Activated B cell treated with CpG ODN at 0.5 μM for 24 hours (primary cell): ENCODE measurements at regions of chr3 and their contacts with region 1.

Region 1: GRCh38 chr3:124928333-124929202 is 6.0 kb downstream of the MUC13 start:
- DNase-seq: no peak
- ATAC-seq: no peak
- H3K4me3 Mint-ChIP-seq: no peak overlapping the region
- H3K27ac Mint-ChIP-seq: no peak overlapping the region
- H3K4me1 Mint-ChIP-seq: no peaks in the 10 kb centered on the region
- H3K27me3 Mint-ChIP-seq: peaks cover 10% of the 10 kb centered on the region
- CTCF ChIP-seq: no peak

Region 2: GRCh38 chr3:124315215-124316033 is 613.1 kb before region 1 on chr3:
- CTCF ChIA-PET with region 1: no interaction called
- POLR2A ChIA-PET with region 1: no interaction called
- intact Hi-C with region 1: no loop called
- DNase-seq: no peak
- ATAC-seq: no peak
- H3K4me3 Mint-ChIP-seq: no peak overlapping the region
- H3K27ac Mint-ChIP-seq: no peak overlapping the region
- H3K4me1 Mint-ChIP-seq: no peaks in the 10 kb centered on the region
- H3K27me3 Mint-ChIP-seq: no peaks in the 10 kb centered on the region
- CTCF ChIP-seq: no peak

Region 3: GRCh38 chr3:124951511-124952281 is 23.1 kb after region 1 on chr3:
- CTCF ChIA-PET with region 1: no interaction called
- POLR2A ChIA-PET with region 1: no interaction called
- intact Hi-C with region 1: no loop called
- DNase-seq: no peak
- ATAC-seq: no peak
- H3K4me3 Mint-ChIP-seq: no peak overlapping the region
- H3K27ac Mint-ChIP-seq: no peak overlapping the region
- H3K4me1 Mint-ChIP-seq: no peaks in the 10 kb centered on the region
- H3K27me3 Mint-ChIP-seq: no peaks in the 10 kb centered on the region
- CTCF ChIP-seq: no peak

Region 4: DNA sequence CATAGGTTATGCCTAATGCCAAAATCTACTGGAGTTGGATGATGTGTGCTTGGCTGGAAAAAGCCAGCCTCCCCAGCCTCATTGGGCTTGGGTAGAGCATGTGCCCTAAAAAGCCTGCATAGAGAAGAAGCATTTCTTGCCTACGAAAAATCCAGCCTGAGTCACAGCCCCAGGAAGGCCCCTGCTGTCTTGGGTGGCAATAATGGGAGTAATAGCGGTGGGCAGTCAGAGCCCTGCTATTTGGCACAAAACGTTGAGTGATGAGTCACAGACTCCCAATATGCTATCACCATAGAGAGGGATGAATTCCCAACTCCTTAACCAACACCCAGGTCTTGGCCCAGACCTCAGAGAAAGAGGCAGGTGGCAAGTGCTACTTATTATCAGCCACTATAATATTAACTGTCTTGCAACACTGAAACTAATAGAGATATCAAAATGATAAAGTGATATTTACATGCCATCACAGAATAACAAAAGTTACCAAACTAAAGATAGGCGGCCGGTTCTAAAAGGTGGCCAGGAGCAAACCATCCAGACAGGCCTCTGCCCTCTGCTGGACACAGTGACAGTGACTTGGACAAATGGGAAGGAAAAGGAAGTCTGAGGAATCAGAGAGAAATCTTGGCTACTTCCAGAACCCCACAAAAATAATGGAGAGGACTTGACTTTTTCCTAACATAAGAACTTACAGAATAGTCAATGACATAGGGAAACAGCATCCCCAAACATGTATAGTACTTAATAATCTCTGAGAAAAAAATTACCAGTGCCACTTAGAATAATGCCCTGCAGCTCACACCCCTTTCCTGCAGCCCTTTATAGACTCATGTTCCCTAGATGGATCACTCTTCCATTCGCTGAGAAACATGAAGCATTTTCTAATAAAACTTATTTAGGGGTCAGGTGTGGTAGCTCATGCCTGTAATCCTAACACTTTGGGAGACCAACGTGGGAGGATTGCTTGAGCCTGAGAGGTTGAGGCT is 57.9 kb after region 1 on chr3:
- CTCF ChIA-PET with region 1: no interaction called
- POLR2A ChIA-PET with region 1: no interaction called
- intact Hi-C with region 1: no loop called
- DNase-seq: no peak
- ATAC-seq: no peak
- H3K4me3 Mint-ChIP-seq: no peak overlapping the region
- H3K27ac Mint-ChIP-seq: no peak overlapping the region
- H3K4me1 Mint-ChIP-seq: peaks cover 3% of the 10 kb centered on the region
- H3K27me3 Mint-ChIP-seq: no peaks in the 10 kb centered on the region
- CTCF ChIP-seq: no peak

Region 5: DNA sequence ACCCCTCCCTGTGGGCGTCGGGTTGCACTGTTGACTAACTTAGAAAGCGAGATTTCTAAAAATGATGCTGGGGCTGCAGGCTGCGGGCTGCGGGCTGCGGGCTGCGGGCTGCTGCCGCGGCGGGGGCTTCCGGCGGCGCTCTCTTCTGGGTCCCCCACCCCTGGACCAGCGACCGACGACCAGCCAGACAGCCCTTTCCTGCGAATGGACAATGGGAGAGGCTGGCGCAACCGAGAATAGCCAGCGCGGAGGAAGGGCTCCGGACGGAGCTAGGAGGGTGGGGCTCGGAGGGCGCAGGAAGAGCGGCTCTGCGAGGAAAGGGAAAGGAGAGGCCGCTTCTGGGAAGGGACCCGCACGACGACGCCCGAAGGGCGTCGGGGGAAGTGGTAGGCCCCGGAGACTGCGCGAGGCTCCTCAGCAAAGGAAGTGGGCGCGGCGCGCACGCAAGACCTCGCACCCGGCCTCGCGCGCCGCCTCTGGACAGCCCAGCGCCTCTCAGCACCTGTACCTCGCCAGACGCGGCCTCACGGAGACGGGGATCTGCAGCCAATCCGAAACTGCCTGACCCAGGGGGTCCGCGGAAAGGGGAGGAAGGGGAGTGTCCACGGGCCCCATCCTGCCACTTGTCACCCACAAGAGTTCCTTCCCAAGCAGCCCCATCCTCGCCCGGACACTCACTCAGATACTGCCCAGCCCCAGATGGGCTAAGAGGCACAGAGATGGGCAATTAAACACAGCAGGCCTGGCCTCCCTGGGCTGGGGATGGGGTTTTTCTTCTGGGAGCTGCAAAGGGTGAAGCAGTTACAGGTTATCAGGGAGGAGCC is 213.2 kb after region 1 on chr3:
- CTCF ChIA-PET with region 1: no interaction called
- POLR2A ChIA-PET with region 1: no interaction called
- intact Hi-C with region 1: loop called (anchors 10 kb)
- DNase-seq: peak; percentile 44
- ATAC-seq: peak; percentile 88
- H3K4me3 Mint-ChIP-seq: peak overlapping the region; percentile 82
- H3K27ac Mint-ChIP-seq: peak overlapping the region; percentile 79
- H3K4me1 Mint-ChIP-seq: peaks cover 66% of the 10 kb centered on the region
- H3K27me3 Mint-ChIP-seq: no peaks in the 10 kb centered on the region
- CTCF ChIP-seq: no peak

Region 6: GRCh38 chr3:125202197-125202596 is 273.6 kb after region 1 on chr3:
- CTCF ChIA-PET with region 1: no interaction called
- POLR2A ChIA-PET with region 1: no interaction called
- intact Hi-C with region 1: loop called (anchors 1 kb)
- DNase-seq: no peak
- ATAC-seq: peak; percentile 50
- H3K4me3 Mint-ChIP-seq: no peak overlapping the region
- H3K27ac Mint-ChIP-seq: no peak overlapping the region
- H3K4me1 Mint-ChIP-seq: peaks cover 8% of the 10 kb centered on the region
- H3K27me3 Mint-ChIP-seq: peaks cover 3% of the 10 kb centered on the region
- CTCF ChIP-seq: no peak

Region 7: GRCh38 chr3:125437631-125438435 is 509.3 kb after region 1 on chr3:
- CTCF ChIA-PET with region 1: interaction called, 5 read pairs
- POLR2A ChIA-PET with region 1: no interaction called
- intact Hi-C with region 1: loop called (anchors 1 kb)
- DNase-seq: peak; percentile 42
- ATAC-seq: peak; percentile 57
- H3K4me3 Mint-ChIP-seq: no peak overlapping the region
- H3K27ac Mint-ChIP-seq: no peak overlapping the region
- H3K4me1 Mint-ChIP-seq: no peaks in the 10 kb centered on the region
- H3K27me3 Mint-ChIP-seq: no peaks in the 10 kb centered on the region
- CTCF ChIP-seq: peak; percentile 95

Region 8: GRCh38 chr3:125585595-125586223 is 657.1 kb after region 1 on chr3:
- CTCF ChIA-PET with region 1: no interaction called
- POLR2A ChIA-PET with region 1: no interaction called
- intact Hi-C with region 1: loop called (anchors 5 kb)
- DNase-seq: no peak
- ATAC-seq: no peak
- H3K4me3 Mint-ChIP-seq: no peak overlapping the region
- H3K27ac Mint-ChIP-seq: no peak overlapping the region
- H3K4me1 Mint-ChIP-seq: peaks cover 34% of the 10 kb centered on the region
- H3K27me3 Mint-ChIP-seq: no peaks in the 10 kb centered on the region
- CTCF ChIP-seq: peak; percentile 59